Activated CD4-positive, alpha-beta memory T cell treated with anti-CD3 and anti-CD28 coated beads for 36 hours (primary cell): ENCODE measurements at regions of chr3 and their contacts with region 1.

Region 1: DNA sequence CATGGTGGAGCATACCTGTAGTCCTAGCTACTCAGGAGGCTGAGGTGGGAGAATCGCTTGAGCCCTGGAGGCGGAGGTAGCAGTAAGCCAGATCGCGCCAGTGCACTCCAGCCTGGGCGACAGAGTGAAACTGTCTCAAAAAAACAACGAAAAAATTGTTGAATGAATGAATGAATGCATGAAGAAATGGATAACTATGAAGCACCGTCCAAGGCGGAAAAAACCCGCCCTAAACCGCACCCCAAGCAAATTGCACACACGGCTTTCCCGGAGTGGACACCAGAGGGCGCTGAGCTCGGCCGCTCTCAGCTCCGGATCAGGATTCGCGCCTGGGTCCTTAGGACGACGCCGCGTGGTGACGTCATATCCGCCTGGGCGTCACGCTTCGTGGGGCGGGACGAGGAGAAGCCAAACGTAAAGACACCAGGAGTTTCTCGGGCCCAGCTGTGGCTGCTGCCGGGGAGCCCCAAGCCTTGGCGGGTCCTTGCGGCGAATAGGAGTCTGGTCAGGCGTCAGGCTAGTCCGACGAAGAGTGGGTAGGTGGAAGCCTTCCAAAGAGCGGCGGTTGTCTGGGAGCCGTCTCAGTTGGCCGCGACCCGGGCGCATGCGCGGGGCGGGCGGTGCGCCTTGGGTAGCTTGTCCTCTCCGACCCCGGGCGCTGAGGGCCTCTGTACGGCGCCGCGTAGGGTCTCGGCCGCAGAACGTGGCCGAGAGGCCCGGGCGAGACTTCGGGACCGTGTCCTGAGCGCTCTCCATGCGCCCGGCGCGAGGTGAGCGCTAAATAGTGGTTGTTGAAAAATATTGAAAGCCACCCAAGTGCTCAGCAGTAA is at the starts of genes HTD2 and RPP14:
- DNase-seq: peak; percentile 99
- H3K4me3 Mint-ChIP-seq: peak within 1 kb of the TSS; percentile 94
- H3K27ac Mint-ChIP-seq: peak within 1 kb of the TSS; percentile 98
- H3K4me1 Mint-ChIP-seq: peaks cover 32% of the 10 kb centered on the region
- H3K27me3 Mint-ChIP-seq: peaks cover 7% of the 10 kb centered on the region
- total RNA-seq, gene HTD2: 7.6 to 9.5 TPM
- total RNA-seq, gene RPP14: 14.0 to 15.4 TPM

Region 2: GRCh38 chr3:57538452-57538851 is 767.6 kb before region 1 on chr3:
- CTCF ChIA-PET with region 1: no interaction called
- POLR2A ChIA-PET with region 1: no interaction called
- intact Hi-C with region 1: no loop called
- DNase-seq: no peak
- H3K4me3 Mint-ChIP-seq: no peak overlapping the region
- H3K27ac Mint-ChIP-seq: no peak overlapping the region
- H3K4me1 Mint-ChIP-seq: no peaks in the 10 kb centered on the region
- H3K27me3 Mint-ChIP-seq: no peaks in the 10 kb centered on the region

Region 3: DNA sequence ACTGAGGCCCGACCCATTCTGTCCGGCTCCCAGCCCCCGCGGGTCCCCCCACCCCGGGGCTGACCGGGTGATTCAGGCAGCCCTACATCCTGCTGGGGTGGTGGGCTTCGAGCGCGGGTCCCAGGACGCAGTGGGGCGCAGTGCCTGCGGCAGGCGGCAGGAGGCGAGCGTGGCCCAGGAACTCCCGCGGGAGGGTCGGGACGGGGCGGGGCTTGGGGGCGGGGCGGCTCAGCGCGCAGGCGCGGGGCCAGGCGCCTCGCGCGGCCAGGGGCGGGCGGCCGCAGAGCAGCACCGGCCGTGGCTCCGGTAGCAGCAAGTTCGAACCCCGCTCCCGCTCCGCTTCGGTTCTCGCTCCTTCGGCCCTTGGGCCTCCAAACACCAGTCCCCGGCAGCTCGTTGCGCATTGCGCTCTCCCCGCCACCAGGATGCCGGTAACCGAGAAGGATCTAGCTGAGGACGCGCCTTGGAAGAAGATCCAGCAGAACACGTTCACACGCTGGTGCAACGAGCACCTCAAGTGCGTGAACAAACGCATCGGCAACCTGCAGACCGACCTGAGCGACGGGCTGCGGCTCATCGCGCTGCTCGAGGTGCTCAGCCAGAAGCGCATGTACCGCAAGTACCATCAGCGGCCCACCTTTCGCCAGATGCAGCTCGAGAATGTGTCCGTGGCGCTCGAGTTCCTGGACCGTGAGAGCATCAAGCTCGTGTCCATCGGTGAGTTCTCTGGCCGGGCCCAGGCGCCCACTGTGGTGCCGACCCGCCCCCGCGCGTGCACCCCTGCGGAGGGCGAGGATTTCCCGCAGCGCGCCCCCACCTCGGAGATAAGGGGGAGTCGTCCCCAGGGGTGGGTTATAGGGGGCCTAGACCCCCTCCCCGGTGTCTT is 297.7 kb before region 1 on chr3 and contains the start of gene FLNB:
- CTCF ChIA-PET with region 1: interaction called, 20 read pairs
- POLR2A ChIA-PET with region 1: no interaction called
- intact Hi-C with region 1: loop called (anchors 1 kb)
- DNase-seq: peak; percentile 87
- H3K4me3 Mint-ChIP-seq: peak within 1 kb of the TSS; percentile 91
- H3K27ac Mint-ChIP-seq: peak within 1 kb of the TSS; percentile 71
- H3K4me1 Mint-ChIP-seq: peaks cover 25% of the 10 kb centered on the region
- H3K27me3 Mint-ChIP-seq: no peaks in the 10 kb centered on the region
- total RNA-seq, gene FLNB: 23.1 to 26.0 TPM

Region 4: DNA sequence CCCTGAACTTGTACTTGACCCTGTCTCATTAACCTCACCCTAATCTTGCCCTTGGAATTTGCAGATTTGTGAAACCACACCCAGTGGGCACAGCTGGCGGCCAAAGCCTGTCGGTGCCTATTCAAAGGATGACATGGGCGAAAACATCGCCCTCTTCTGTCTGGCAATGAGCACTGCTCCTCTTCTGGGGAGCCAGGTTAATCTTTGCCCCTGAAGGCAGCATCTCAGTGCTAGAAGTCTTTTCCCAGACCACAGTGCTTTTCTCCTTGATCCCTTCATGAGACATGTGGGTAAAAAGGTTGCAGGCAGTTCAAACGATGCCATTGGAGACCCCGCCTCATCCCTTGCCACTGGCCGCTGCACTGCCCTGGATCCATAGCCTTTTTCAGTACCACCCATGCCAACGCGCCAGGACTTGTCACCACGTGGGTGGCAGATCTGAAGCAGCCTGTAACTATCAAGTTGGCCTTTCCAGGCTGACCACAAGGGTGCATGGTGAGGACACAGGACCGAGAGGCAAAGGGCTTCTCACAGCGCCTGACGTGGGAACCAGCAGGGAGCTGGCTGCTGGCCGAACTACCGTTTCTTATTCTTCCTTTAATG is 88.8 kb before region 1 on chr3:
- CTCF ChIA-PET with region 1: interaction called, 9 read pairs
- POLR2A ChIA-PET with region 1: interaction called, 3 read pairs
- intact Hi-C with region 1: loop called (anchors 1 kb)
- DNase-seq: peak; percentile 71
- H3K4me3 Mint-ChIP-seq: no peak overlapping the region
- H3K27ac Mint-ChIP-seq: no peak overlapping the region
- H3K4me1 Mint-ChIP-seq: peaks cover 37% of the 10 kb centered on the region
- H3K27me3 Mint-ChIP-seq: peaks cover 6% of the 10 kb centered on the region

Region 5: GRCh38 chr3:58324391-58325390 is 18.6 kb after region 1 on chr3:
- CTCF ChIA-PET with region 1: interaction called, 48 read pairs
- POLR2A ChIA-PET with region 1: interaction called, 4 read pairs
- intact Hi-C with region 1: loop called (anchors 1 kb)
- DNase-seq: no peak
- H3K4me3 Mint-ChIP-seq: peak overlapping the region; percentile 34
- H3K27ac Mint-ChIP-seq: peak overlapping the region; percentile 93
- H3K4me1 Mint-ChIP-seq: peaks cover 37% of the 10 kb centered on the region
- H3K27me3 Mint-ChIP-seq: no peaks in the 10 kb centered on the region

Region 6: GRCh38 chr3:58414538-58415197 is 108.6 kb after region 1 on chr3:
- CTCF ChIA-PET with region 1: interaction called, 42 read pairs
- POLR2A ChIA-PET with region 1: interaction called, 3 read pairs
- intact Hi-C with region 1: no loop called
- DNase-seq: peak; percentile 48
- H3K4me3 Mint-ChIP-seq: no peak overlapping the region
- H3K27ac Mint-ChIP-seq: no peak overlapping the region
- H3K4me1 Mint-ChIP-seq: peaks cover 3% of the 10 kb centered on the region
- H3K27me3 Mint-ChIP-seq: no peaks in the 10 kb centered on the region

Region 7: DNA sequence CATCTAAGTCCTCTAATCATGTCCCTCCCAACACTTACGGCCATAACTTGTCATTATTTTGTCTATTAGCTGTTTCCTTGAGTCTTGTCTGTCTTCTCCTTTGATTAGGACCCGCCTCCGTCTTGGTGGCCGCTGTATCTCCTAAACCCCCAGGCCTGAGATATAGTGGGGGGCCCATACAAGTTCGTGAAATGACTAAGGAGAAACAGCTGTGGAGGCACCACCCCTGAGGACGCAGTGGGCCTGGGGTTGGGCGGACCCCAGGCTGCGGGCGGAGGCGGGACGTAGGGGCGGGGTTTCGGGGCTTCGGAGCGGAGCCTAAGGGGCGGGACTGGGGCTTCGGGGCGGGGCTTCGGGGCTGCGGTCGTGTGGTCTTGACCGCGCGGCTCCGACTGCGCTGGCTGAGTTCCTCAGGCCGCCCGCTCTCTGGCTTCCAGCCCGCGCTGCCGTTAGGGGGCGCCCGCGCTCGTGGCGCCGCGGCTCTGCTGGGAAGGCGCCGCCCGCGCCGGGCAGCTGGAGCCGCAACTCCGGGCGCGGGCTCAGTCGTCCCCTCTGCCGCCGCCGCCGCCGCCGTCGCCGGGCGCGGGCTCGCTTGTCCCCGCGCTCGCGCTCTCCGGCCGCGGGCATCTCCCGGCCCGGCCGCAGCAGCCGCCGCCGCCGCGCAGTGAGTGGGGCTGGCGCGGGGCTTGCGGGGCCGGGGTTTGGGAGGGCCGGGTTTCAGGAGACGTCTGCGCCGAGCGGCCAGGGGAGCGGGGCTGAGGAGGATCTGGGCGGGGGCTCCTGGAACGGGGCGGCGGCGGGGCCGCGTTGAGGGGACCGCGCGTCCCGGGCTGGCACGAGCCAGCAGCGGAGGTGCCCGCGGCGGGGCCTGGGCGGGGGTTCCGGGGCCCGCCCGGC is 185.7 kb after region 1 on chr3 and contains the start of gene KCTD6:
- CTCF ChIA-PET with region 1: interaction called, 23 read pairs
- POLR2A ChIA-PET with region 1: interaction called, 7 read pairs
- intact Hi-C with region 1: loop called (anchors 1 kb)
- DNase-seq: peak; percentile 90
- H3K4me3 Mint-ChIP-seq: peak within 1 kb of the TSS; percentile 90
- H3K27ac Mint-ChIP-seq: peak within 1 kb of the TSS; percentile 77
- H3K4me1 Mint-ChIP-seq: peaks cover 52% of the 10 kb centered on the region
- H3K27me3 Mint-ChIP-seq: peaks cover 3% of the 10 kb centered on the region
- total RNA-seq, gene KCTD6: 8.0 to 8.6 TPM